Activated CD8-positive, alpha-beta T cell treated with anti-CD3 and anti-CD28 coated beads for 36 hours (primary cell): ENCODE measurements at regions of chr1 and their contacts with region 1.

Region 1: DNA sequence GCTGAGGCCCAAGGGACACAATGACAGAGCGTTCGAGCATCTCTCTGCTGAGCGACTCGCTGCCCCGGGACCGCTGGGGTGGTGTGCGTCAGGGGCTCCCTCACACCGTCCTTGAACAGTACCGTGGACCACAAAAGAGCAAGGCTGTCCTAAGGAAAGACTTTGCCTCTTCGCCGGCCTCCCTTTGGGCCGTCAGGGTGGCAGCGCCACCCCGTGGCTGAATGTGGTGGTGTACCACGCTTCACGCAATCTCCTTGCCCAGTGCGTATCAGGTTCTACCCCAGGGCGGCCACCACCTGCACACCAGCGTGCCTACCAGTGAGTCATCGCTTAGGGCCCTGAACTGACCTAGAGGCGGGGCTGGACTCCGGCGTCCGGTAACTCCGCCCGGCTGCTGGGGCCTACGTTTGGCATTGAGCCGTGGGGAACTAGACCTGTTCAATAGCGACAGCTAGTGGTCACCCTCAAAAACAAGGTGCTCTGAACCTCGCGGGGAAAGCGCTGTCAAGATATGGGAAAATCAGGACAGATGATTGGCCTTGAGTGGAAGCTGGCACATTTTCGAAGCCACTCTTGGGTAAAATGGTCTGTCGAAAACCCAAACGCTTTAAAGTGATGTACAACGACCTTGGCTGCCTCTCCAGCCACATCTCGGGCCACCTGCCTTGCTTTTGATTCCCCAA is 8.1 kb upstream of the TRAF3IP3 start:
- DNase-seq: peak; percentile 95
- ATAC-seq: peak; percentile 79
- H3K4me3 Mint-ChIP-seq: peak overlapping the region; percentile 53
- H3K27ac Mint-ChIP-seq: peak overlapping the region; percentile 95
- H3K4me1 Mint-ChIP-seq: peaks cover 64% of the 10 kb centered on the region
- H3K27me3 Mint-ChIP-seq: no peaks in the 10 kb centered on the region
- CTCF ChIP-seq: peak; percentile 97

Region 2: DNA sequence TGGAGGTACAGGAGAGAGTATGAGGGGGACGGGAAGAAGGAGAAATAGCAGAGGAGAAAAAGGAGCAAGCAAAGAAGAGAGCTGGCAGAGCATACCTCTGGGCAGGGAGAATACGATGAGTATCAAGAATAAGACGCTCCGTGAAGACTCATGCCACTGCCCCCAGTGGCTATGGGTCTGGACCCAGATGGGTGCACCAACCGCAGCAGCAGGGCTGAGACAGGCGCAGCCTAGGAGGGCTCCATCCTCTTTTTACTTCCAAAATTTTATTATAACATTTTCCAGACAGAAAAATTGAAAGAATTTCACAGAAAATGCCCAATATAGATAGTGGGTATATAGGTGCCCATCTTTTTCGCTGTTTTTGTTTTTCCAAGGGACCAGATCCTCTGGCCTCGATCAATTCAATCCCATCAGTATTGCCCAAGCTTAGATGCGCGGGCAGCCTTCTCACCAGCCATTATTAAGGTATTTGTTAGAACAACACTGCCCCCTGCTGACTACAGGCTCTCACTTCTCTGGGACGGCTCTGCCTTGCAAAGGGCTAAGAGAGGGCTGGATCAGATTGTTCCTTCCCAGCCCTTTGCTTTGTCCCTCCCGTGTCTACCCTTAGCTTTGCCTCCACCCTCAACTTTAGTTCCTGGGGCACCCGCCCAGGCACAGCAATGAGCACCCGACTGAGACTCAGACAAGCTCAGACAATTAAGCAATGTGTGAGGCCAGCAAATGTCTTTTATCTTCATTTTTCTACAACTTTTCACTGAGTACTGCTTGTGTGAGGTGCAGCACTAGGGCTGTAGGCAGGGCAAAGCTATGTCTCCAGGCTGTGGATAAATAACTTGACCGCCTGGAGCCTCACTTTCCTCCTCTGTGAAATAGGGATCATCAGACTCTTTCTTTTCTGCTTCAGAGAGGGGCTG is 181.7 kb before region 1 on chr1:
- CTCF ChIA-PET with region 1: interaction called, 20 read pairs
- POLR2A ChIA-PET with region 1: no interaction called
- intact Hi-C with region 1: loop called (anchors 2 kb)
- DNase-seq: peak; percentile 89
- ATAC-seq: peak; percentile 91
- H3K4me3 Mint-ChIP-seq: no peak overlapping the region
- H3K27ac Mint-ChIP-seq: no peak overlapping the region
- H3K4me1 Mint-ChIP-seq: peaks cover 6% of the 10 kb centered on the region
- H3K27me3 Mint-ChIP-seq: peaks cover 36% of the 10 kb centered on the region
- CTCF ChIP-seq: peak; percentile 82

Region 3: GRCh38 chr1:209585672-209586071 is 162.0 kb before region 1 on chr1:
- CTCF ChIA-PET with region 1: interaction called, 16 read pairs
- POLR2A ChIA-PET with region 1: no interaction called
- intact Hi-C with region 1: no loop called
- DNase-seq: peak; percentile 17
- ATAC-seq: peak; percentile 39
- H3K4me3 Mint-ChIP-seq: no peak overlapping the region
- H3K27ac Mint-ChIP-seq: no peak overlapping the region
- H3K4me1 Mint-ChIP-seq: no peaks in the 10 kb centered on the region
- H3K27me3 Mint-ChIP-seq: peaks cover 7% of the 10 kb centered on the region
- CTCF ChIP-seq: no peak

Region 4: DNA sequence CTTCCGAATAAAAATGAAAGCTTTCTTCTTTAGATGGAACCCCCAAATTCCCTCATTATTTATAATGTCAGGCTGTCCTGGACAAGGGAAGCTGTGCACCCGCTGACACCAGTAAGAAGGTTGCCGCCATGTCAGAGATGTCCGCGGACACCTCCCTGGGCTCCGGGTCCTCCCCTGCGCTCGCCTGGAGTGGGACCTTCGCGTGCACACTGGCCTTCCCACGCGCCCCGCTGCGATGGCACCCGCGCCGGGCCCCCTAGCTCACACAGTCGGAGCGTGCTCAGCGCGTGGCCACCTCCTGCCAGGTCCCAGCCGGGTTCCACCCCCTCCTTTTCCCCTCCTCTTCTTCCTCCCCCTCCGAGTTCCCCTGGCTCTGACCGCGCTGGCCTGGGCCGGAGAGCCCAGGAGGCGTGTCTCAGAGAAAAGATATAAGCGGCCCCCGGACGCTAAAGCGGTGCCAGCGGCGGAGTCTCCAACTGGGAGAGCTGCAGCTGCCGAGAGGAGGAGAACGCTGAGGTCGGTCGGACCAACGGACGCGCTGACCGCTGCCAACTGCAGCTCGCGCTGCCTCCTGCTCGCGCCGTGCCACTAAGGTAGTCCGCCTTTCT is 72.7 kb before region 1 on chr1 and contains the start of gene G0S2:
- CTCF ChIA-PET with region 1: interaction called, 12 read pairs
- POLR2A ChIA-PET with region 1: interaction called, 8 read pairs
- intact Hi-C with region 1: loop called (anchors 5 kb)
- DNase-seq: peak; percentile 70
- ATAC-seq: peak; percentile 52
- H3K4me3 Mint-ChIP-seq: peak within 1 kb of the TSS; percentile 69
- H3K27ac Mint-ChIP-seq: peak within 1 kb of the TSS; percentile 37
- H3K4me1 Mint-ChIP-seq: peaks cover 37% of the 10 kb centered on the region
- H3K27me3 Mint-ChIP-seq: peaks cover 53% of the 10 kb centered on the region
- CTCF ChIP-seq: no peak
- total RNA-seq, gene G0S2: 4.9 to 5.7 TPM

Region 5: GRCh38 chr1:209704584-209704983 is 43.1 kb before region 1 on chr1 and contains the start of gene HSD11B1:
- CTCF ChIA-PET with region 1: interaction called, 4 read pairs
- POLR2A ChIA-PET with region 1: no interaction called
- intact Hi-C with region 1: loop called (anchors 5 kb)
- DNase-seq: no peak
- ATAC-seq: no peak
- H3K4me3 Mint-ChIP-seq: no peak within 1 kb of the TSS
- H3K27ac Mint-ChIP-seq: peak within 1 kb of the TSS; percentile 76
- H3K4me1 Mint-ChIP-seq: peaks cover 33% of the 10 kb centered on the region
- H3K27me3 Mint-ChIP-seq: no peaks in the 10 kb centered on the region
- CTCF ChIP-seq: no peak
- total RNA-seq, gene HSD11B1: 0.47 to 0.59 TPM

Region 6: GRCh38 chr1:209733409-209734192 is 14.1 kb before region 1 on chr1:
- CTCF ChIA-PET with region 1: interaction called, 40 read pairs
- POLR2A ChIA-PET with region 1: interaction called, 4 read pairs
- intact Hi-C with region 1: no loop called
- DNase-seq: no peak
- ATAC-seq: no peak
- H3K4me3 Mint-ChIP-seq: no peak overlapping the region
- H3K27ac Mint-ChIP-seq: no peak overlapping the region
- H3K4me1 Mint-ChIP-seq: peaks cover 38% of the 10 kb centered on the region
- H3K27me3 Mint-ChIP-seq: no peaks in the 10 kb centered on the region
- CTCF ChIP-seq: no peak

Region 7: DNA sequence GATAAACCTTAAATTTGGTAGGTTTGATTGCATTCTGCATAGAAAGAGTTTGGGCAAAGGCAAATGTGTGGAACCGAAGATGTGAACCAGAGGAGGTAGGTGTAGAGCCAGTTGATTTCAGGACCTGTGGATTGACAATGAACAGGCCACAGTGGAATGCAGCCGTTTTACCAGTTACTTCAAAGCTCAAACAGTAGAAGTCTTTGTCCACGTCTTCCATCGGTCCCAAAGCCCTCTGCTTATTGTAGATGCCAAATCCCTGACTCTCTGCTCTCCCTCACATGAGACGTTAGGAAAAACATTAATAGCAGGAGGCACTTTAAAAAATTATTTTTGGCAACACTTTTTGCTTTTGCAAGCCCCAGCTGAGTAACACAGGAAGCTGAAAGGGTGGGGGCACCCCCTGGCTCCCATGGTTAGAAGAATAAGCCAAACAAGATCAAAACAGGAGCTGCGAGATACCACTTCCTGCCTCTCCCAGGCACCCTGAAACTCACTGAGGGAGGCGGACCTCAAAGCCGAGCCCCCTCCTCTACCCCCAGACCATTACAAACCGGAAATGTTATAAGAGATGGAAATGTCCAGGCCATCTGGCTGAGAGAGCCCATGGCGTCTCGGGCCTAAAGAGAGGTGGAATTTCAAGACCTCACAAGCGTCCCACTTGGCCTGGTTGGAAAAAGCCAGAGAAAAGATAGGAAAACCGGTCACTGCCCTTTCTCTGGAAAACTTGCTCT is 21.6 kb after region 1 on chr1:
- CTCF ChIA-PET with region 1: interaction called, 105 read pairs
- POLR2A ChIA-PET with region 1: interaction called, 242 read pairs
- intact Hi-C with region 1: no loop called
- DNase-seq: peak; percentile 94
- ATAC-seq: peak; percentile 67
- H3K4me3 Mint-ChIP-seq: no peak overlapping the region
- H3K27ac Mint-ChIP-seq: no peak overlapping the region
- H3K4me1 Mint-ChIP-seq: peaks cover 39% of the 10 kb centered on the region
- H3K27me3 Mint-ChIP-seq: no peaks in the 10 kb centered on the region
- CTCF ChIP-seq: no peak

Region 8: GRCh38 chr1:209993061-209993830 is 245.5 kb after region 1 on chr1:
- CTCF ChIA-PET with region 1: no interaction called
- POLR2A ChIA-PET with region 1: no interaction called
- intact Hi-C with region 1: no loop called
- DNase-seq: no peak
- ATAC-seq: no peak
- H3K4me3 Mint-ChIP-seq: no peak overlapping the region
- H3K27ac Mint-ChIP-seq: no peak overlapping the region
- H3K4me1 Mint-ChIP-seq: no peaks in the 10 kb centered on the region
- H3K27me3 Mint-ChIP-seq: peaks cover 15% of the 10 kb centered on the region
- CTCF ChIP-seq: no peak